IMR-90 (cell line): ENCODE measurements at regions of chr7 and their contacts with region 1.

Region 1: DNA sequence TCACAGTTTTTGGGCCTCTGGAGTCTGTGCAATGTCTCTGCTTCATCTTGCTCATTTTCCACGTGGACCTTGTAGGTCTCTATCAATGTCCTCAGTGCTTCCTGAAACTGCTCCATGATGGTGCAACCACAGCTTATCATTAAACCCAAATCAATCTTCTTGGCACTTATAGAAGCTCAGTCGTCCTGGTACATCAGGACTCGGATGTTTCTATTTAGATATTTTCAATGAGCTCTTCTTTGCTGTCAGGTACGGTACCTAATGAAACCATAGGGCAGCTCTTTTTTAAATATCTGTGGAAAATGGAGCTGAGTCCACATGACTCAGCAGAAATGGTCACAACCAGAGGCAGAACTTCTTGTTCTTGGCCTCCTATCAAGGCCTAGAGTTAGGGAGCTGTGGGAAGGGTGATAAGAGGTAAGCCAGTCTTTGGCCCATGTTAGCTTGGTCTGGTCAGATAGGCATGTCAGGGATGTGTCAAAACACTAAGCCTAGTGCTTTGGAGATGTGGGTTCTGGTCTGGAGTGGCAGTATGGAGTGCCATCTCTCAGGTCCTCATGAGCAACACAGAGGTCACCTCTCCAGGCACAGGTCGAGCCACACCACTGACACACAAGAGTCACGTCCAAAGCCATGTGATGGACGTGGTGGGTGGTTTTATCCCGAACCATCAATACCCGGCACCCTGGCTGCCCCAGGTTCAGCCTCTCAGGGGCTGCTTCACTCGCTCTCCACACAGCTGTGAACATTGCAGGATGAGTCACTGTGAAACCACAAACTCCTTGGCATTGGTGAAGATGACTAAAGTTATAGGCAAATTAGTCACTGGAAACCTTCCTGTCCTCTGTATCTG is 87.0 kb downstream of the TBXAS1 start:
- DNase-seq: peak; percentile 99
- ATAC-seq: peak; percentile 68
- H3K4me3 ChIP-seq: no peak overlapping the region
- H3K27ac ChIP-seq: peak overlapping the region; percentile 83
- H3K4me1 ChIP-seq: peaks cover 28% of the 10 kb centered on the region
- H3K27me3 ChIP-seq: no peaks in the 10 kb centered on the region
- CTCF ChIP-seq: no peak
- POLR2A ChIP-seq: no peak
- RAD21 ChIP-seq: 0 out of 2 replicates have a peak, but pooled peaks have one; percentile 14

Region 2: GRCh38 chr7:139829025-139829774 is 86.9 kb before region 1 on chr7 and contains the start of gene TBXAS1:
- CTCF ChIA-PET with region 1: no interaction called
- POLR2A ChIA-PET with region 1: no interaction called
- dilution Hi-C with region 1: no loop called
- in situ Hi-C with region 1: no loop called
- intact Hi-C with region 1: loop called (anchors 2 kb)
- DNase-seq: peak; percentile 47
- ATAC-seq: peak; percentile 33
- H3K4me3 ChIP-seq: peak within 1 kb of the TSS; percentile 4; the same call in 1 of the 2 replicates
- H3K27ac ChIP-seq: peak within 1 kb of the TSS; percentile 87
- H3K4me1 ChIP-seq: peaks cover 33% of the 10 kb centered on the region
- H3K27me3 ChIP-seq: no peaks in the 10 kb centered on the region
- CTCF ChIP-seq: no peak
- POLR2A ChIP-seq: no peak
- RAD21 ChIP-seq: no peak
- total RNA-seq, gene TBXAS1: 5.3 and 5.9 TPM in 2 replicates

Region 3: DNA sequence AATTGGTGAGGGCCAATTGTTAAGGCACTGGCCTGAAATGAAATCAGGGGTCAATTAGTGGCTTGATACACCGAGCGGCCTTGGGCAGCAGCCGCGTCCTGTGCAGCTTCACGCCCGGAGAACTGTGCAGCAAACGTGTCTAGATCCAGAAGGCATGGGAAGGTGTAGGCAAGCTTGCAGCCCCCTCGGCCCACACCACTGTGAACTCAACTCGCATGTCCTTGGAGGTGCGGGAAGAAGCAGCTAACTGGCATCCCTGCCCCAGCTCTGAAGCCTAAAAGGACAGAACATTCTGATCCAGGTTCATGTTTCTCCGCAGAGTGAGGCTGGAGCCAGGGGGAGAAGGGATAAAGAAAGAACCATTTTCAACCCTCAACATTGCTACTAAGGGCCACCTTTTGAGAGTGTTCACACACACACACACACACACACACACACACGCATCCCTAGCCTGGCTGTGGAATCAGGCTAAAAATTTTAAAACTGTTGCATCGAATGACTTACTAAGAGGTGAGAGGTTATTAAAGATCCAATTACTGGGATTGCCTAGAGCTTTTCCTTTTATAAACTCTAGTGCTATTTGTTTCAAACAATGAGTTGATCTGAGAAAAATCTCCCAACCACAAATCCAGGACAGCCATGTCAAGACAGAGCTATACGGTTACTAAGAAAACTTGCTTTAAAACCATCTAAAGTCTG is 42.7 kb after region 1 on chr7:
- CTCF ChIA-PET with region 1: no interaction called
- POLR2A ChIA-PET with region 1: no interaction called
- dilution Hi-C with region 1: no loop called
- in situ Hi-C with region 1: no loop called
- intact Hi-C with region 1: loop called (anchors 1 kb)
- DNase-seq: peak; percentile 98
- ATAC-seq: peak; percentile 90
- H3K4me3 ChIP-seq: no peak overlapping the region
- H3K27ac ChIP-seq: peak overlapping the region; percentile 97
- H3K4me1 ChIP-seq: peaks cover 19% of the 10 kb centered on the region
- H3K27me3 ChIP-seq: no peaks in the 10 kb centered on the region; the same call in 1 of the 2 replicates
- CTCF ChIP-seq: no peak
- POLR2A ChIP-seq: no peak
- RAD21 ChIP-seq: no peak

Region 4: GRCh38 chr7:139995017-139995931 is 79.2 kb after region 1 on chr7:
- CTCF ChIA-PET with region 1: no interaction called
- POLR2A ChIA-PET with region 1: no interaction called
- dilution Hi-C with region 1: no loop called
- in situ Hi-C with region 1: no loop called
- intact Hi-C with region 1: loop called (anchors 1 kb)
- DNase-seq: peak; percentile 87
- ATAC-seq: peak; percentile 89
- H3K4me3 ChIP-seq: no peak overlapping the region
- H3K27ac ChIP-seq: peak overlapping the region; percentile 82
- H3K4me1 ChIP-seq: peaks cover 20% of the 10 kb centered on the region
- H3K27me3 ChIP-seq: no peaks in the 10 kb centered on the region
- CTCF ChIP-seq: no peak
- POLR2A ChIP-seq: no peak
- RAD21 ChIP-seq: peak; percentile 27; the same call in 1 of the 2 replicates